Activated CD4-positive, alpha-beta memory T cell treated with anti-CD3 and anti-CD28 coated beads for 36 hours (primary cell): ENCODE measurements at regions of chr14 and their contacts with region 1.

Region 1: GRCh38 chr14:93655078-93655750 is 133.1 kb downstream of the PRIMA1 start:
- DNase-seq: no peak
- H3K4me3 Mint-ChIP-seq: no peak overlapping the region
- H3K27ac Mint-ChIP-seq: no peak overlapping the region
- H3K4me1 Mint-ChIP-seq: no peaks in the 10 kb centered on the region
- H3K27me3 Mint-ChIP-seq: peaks cover 28% of the 10 kb centered on the region

Region 2: GRCh38 chr14:93892923-93893558 is 237.8 kb after region 1 on chr14:
- CTCF ChIA-PET with region 1: interaction called, 12 read pairs
- POLR2A ChIA-PET with region 1: no interaction called
- intact Hi-C with region 1: loop called (anchors 1 kb)
- DNase-seq: peak; percentile 76
- H3K4me3 Mint-ChIP-seq: no peak overlapping the region
- H3K27ac Mint-ChIP-seq: no peak overlapping the region
- H3K4me1 Mint-ChIP-seq: no peaks in the 10 kb centered on the region
- H3K27me3 Mint-ChIP-seq: peaks cover 15% of the 10 kb centered on the region

Region 3: DNA sequence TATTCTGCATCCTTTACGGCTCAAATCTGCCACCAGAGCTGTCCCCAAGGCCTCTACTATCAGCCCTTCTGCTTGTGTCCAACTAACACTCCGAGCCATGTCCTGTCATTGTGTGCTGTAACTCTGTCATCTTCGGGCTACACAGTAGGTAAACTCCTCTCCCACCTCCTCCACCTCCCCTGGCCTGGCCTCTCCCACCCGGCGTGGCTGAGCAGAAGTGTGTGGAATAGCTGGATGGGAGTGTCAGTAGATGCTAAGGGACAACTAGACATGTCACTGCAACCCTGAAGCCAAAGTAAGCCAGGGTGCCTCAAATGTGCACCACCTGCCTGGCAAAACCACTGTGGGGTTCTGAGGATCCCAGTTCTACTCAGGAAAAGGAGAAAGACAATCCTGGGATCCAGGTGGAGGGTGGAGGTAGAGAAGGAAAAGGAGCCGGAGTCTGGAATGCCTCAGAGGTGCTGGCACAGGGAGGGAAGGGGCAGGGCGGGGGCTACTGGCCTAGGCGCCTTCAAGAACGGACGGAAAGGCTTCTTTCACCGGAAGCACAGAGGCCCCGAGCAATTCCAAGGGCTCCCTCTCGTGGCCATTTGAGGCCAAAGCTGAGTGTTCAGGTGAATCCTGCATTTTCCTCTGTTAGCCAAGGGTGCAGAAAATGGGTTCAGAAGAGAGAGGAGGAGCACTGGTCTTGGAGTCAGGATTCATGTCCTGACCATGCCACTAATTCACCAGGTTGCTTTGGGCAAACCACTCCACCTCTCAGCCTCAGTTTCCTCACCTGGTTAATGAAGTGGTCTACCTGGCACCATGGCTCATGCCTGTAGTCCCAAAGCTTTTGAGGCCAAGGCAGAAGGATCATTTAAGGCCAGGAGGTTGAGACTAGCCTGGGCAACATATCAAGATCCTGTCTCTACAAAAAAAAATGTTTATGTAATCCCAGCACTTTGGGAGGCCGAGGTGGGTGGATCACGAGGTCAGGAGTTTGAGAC is 251.4 kb after region 1 on chr14:
- CTCF ChIA-PET with region 1: interaction called, 27 read pairs
- POLR2A ChIA-PET with region 1: no interaction called
- intact Hi-C with region 1: loop called (anchors 1 kb)
- DNase-seq: peak; percentile 82
- H3K4me3 Mint-ChIP-seq: no peak overlapping the region
- H3K27ac Mint-ChIP-seq: no peak overlapping the region
- H3K4me1 Mint-ChIP-seq: no peaks in the 10 kb centered on the region
- H3K27me3 Mint-ChIP-seq: peaks cover 12% of the 10 kb centered on the region